Right ventricle myocardium inferior (tissue), 1 donor: ENCODE measurements at regions of chr11 and their contacts with region 1.

Region 1: DNA sequence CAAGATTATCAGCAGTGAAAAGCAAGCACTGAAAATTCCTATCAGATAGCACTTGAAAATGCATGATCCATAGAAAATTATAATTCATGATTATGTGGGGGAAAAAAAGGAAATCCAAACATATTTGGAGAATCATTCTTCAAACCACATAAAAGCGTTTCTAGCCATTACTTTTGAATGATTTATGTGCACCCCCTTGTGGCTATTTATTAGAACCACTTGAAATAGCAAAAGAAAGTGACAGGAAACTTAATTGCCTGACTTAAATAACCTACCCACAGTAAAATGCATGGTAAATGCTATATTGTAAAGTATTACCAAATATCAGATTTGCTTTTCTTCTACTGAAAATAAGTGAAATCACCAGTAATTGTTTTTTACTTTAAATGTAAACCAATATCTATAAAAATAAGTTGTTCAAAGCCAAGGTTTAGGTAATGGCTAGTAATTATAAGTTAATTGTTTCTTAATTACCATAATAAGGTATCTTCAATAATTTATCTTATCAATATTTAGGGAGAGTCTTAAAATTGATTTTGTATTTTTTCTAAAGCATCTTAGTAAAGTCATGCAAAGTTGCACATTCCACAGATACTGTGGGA is 168.5 kb downstream of the ARHGAP42 start:
- DNase-seq: no peak
- ATAC-seq: no peak

Region 2: GRCh38 chr11:100575870-100576705 is 279.5 kb before region 1 on chr11:
- intact Hi-C with region 1: loop called (anchors 2 kb)
- DNase-seq: no peak
- ATAC-seq: peak; percentile 79

Region 3: GRCh38 chr11:100681064-100681502 is 174.5 kb before region 1 on chr11:
- intact Hi-C with region 1: loop called (anchors 2 kb)
- DNase-seq: peak; percentile 75
- ATAC-seq: peak; percentile 69

Region 4: GRCh38 chr11:101765945-101766344 is 910.4 kb after region 1 on chr11:
- intact Hi-C with region 1: no loop called
- DNase-seq: no peak
- ATAC-seq: no peak